ENCODE measurements at regions of chr19 and their contacts with region 1.

Region 1: DNA sequence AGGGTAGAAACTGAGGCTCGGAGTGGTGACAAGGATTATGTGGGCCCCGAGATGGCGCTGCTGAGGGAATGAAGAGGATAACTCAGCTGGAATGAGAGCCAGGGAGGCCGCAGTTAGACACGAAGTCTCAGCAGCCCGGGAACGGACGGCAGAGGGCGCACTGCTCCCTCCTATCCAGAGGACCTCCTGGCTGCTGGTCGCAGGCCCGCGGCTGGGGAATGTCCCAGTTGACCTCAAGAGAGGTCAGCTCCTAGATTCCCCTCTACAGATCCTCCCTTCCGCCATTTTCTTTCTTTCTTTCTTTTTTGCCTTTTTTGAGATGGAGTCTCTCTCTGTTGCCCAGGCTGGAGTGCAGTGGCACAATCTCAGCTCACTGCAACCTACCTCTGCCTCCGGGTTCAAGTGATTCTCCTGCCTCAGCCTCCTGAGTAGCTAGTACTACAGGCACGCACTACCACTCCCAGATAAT is 24.1 kb upstream of the ASPDH start:
- DNase-seq: peak; percentile 95 to 98
- ATAC-seq: peak; percentile 90 to 98
- H3K4me3 ChIP-seq: no peak overlapping the region
- H3K27ac ChIP-seq: no peak overlapping the region
- H3K4me1 ChIP-seq: no peaks in the 10 kb centered on the region
- CTCF ChIP-seq: peak; percentile 98
- EP300 ChIP-seq: no peak
- POLR2A ChIP-seq: no peak
- RAD21 ChIP-seq: peak; percentile 87

Region 2: DNA sequence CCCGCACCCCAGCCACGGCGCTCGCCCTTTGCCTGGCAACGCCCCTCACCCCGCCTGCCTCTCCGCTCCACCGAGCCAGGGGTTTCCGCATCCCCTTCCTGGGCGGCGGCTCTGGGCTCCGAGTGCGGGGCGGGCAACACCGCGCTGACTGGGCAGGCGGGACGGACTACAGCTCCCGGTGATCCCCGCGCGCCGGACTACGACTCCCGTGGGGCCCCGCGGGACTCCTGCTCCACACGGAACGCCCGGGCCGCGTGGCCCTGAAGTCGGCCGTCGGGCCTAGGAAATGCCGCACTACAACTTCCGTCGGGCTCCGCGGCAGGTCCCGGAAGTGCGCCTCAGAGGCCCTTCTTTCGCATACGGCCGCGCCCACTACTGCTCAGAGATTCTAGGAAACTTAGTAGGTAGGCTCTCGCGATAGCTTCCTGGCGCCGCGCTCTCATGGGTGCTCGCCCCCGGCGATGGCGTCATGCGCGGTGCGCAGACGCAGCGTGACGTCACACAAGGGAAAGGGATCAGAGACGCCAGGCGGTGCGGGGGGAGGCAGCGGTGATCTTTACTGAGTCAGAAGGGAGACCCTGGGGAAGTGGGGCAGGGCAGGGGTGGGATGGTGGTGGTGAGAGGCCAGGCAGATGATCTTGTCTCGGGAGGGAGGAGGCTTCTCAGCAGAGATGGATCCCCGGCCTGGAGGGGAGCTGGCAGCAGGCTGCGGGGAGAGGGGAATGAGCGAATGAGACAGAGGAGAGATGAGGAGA is 26.6 kb before region 1 on chr19 and contains the start of gene JOSD2:
- CTCF ChIA-PET with region 1: interaction called, 38 read pairs
- POLR2A ChIA-PET with region 1: no interaction called
- DNase-seq: peak; percentile 99 to 100
- ATAC-seq: peak; percentile 80 to 94
- H3K4me3 ChIP-seq: peak within 1 kb of the TSS; percentile 76
- H3K27ac ChIP-seq: peak within 1 kb of the TSS; percentile 91 to 92
- H3K4me1 ChIP-seq: peaks cover 12% of the 10 kb centered on the region; the same call in 2 of the 3 replicates
- CTCF ChIP-seq: no peak
- EP300 ChIP-seq: no peak
- POLR2A ChIP-seq: peak; percentile 65
- RAD21 ChIP-seq: no peak
- polyA plus RNA-seq, gene JOSD2: 19.3 and 24.2 TPM in 2 replicates

Region 3: GRCh38 chr19:50573741-50574461 is 36.1 kb after region 1 on chr19:
- CTCF ChIA-PET with region 1: interaction called, 21 read pairs
- POLR2A ChIA-PET with region 1: no interaction called
- DNase-seq: no peak
- ATAC-seq: no peak; a peak in 1 of 6 replicates
- H3K4me3 ChIP-seq: no peak overlapping the region
- H3K27ac ChIP-seq: no peak overlapping the region
- H3K4me1 ChIP-seq: no peaks in the 10 kb centered on the region
- CTCF ChIP-seq: no peak
- EP300 ChIP-seq: no peak
- POLR2A ChIP-seq: no peak
- RAD21 ChIP-seq: no peak

Region 4: GRCh38 chr19:50590191-50590590 is 52.4 kb after region 1 on chr19:
- CTCF ChIA-PET with region 1: interaction called, 28 read pairs
- POLR2A ChIA-PET with region 1: no interaction called
- DNase-seq: no peak
- ATAC-seq: no peak
- H3K4me3 ChIP-seq: no peak overlapping the region
- H3K27ac ChIP-seq: no peak overlapping the region
- H3K4me1 ChIP-seq: no peaks in the 10 kb centered on the region
- CTCF ChIP-seq: no peak
- EP300 ChIP-seq: no peak
- POLR2A ChIP-seq: no peak
- RAD21 ChIP-seq: no peak

Region 5: GRCh38 chr19:50705422-50706019 is 167.7 kb after region 1 on chr19:
- CTCF ChIA-PET with region 1: interaction called, 10 read pairs
- POLR2A ChIA-PET with region 1: no interaction called
- DNase-seq: peak; percentile 79 to 95
- ATAC-seq: peak; percentile 84 to 88
- H3K4me3 ChIP-seq: no peak overlapping the region
- H3K27ac ChIP-seq: no peak overlapping the region
- H3K4me1 ChIP-seq: peaks cover 13% of the 10 kb centered on the region; the same call in 1 of the 3 replicates
- CTCF ChIP-seq: peak; percentile 80
- EP300 ChIP-seq: no peak
- POLR2A ChIP-seq: no peak
- RAD21 ChIP-seq: peak; percentile 73 to 76

Region 6: GRCh38 chr19:50777754-50778303 is 240.0 kb after region 1 on chr19:
- CTCF ChIA-PET with region 1: interaction called, 163 read pairs
- POLR2A ChIA-PET with region 1: no interaction called
- DNase-seq: peak in 1 of 2 experiments; percentile 71
- ATAC-seq: peak; percentile 36 to 62; a peak in 5 of 6 replicates
- H3K4me3 ChIP-seq: peak overlapping the region; percentile 29; the same call in 2 of the 3 replicates
- H3K27ac ChIP-seq: no peak overlapping the region
- H3K4me1 ChIP-seq: peaks cover 14% of the 10 kb centered on the region; the same call in 1 of the 3 replicates
- CTCF ChIP-seq: no peak
- EP300 ChIP-seq: no peak
- POLR2A ChIP-seq: no peak
- RAD21 ChIP-seq: no peak